HCT116 (cell line): ENCODE measurements at regions of chr18 and their contacts with region 1.

Region 1: DNA sequence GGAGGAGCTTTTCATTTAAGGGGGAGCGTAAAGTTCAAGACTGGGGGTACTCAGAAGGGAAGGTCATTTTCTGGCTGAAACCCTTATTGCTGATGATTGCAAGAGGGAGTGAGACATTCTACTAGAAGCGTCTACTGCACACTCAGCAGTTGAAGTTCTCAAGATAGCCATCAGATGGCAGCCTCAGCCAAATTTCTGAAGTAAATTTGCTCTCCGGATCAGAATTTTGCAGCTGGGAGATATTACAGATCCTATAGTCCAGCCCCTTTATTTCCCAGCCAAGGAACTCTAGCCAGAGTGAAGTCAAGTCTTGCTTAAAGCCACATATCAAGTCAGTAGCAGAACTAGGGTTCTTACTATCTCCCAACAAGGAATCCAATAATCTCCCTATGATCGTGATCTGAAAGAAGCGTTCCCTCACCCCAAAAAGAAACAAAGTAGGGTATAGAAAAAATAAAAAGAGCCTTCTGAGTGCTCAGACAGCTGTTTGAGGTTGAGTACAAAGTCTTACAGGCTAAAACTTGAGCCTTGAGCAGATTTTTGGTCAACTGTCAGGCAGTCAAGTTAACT is 24.0 kb downstream of the RAX start:
- DNase-seq: peak; percentile 75
- ATAC-seq: peak; percentile 94
- H3K4me3 ChIP-seq: no peak overlapping the region
- H3K27ac ChIP-seq: no peak overlapping the region
- H3K4me1 ChIP-seq: no peaks in the 10 kb centered on the region
- H3K27me3 ChIP-seq: peaks cover 45% of the 10 kb centered on the region
- CTCF ChIP-seq: peak; percentile 72 to 81 (median 73)
- POLR2A ChIP-seq: no peak
- RAD21 ChIP-seq: peak; percentile 74

Region 2: DNA sequence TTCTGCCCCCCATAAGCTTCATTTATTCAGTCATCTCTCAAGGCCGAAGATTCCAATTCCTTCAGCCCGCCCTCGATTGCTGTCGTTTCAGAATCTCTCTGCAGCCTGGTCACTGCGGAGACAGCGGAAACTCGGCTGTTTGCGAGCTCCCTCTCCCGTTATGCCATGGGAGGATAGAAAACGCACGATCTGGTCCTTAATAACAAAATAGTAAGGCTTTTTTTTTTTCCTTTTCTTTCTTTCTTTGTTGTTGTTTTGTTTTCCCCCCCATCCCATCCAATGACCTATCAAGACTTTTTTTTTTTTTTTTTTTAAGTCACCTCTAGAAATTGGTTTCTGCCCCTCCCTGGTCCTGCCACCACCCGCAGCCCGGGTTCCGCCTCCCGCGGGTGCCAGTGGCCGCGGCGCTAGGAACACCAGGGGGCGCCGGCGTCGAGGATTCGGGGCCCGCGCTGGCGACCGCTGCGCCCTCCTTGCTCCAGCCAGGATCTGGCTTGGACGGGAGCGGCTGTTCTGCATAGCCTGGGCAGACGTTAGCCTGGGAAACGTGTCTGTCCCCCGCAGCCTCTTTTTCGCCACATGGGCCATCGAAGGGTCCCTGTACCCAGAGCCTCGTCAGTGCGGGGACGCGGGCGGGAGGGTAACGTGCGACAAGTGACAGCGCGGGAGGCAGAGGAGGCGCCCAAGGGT is 59.1 kb after region 1 on chr18:
- CTCF ChIA-PET with region 1: interaction called, 18 read pairs
- POLR2A ChIA-PET with region 1: interaction called, 3 read pairs
- RAD21 ChIA-PET with region 1: interaction called in 1 of 2 experiments, 5 read pairs
- intact Hi-C with region 1: loop called (anchors 1 kb)
- DNase-seq: peak; percentile 43
- ATAC-seq: peak; percentile 96
- H3K4me3 ChIP-seq: peak overlapping the region; percentile 40 to 54
- H3K27ac ChIP-seq: no peak overlapping the region
- H3K4me1 ChIP-seq: peaks cover 0 to 22% of the 10 kb centered on the region in 2 experiments; a peak in 3 of 4 replicates
- H3K27me3 ChIP-seq: no peaks in the 10 kb centered on the region
- CTCF ChIP-seq: peak; percentile 80 to 97 (median 88)
- POLR2A ChIP-seq: no peak
- RAD21 ChIP-seq: peak; percentile 86